RWPE1 (cell line): ENCODE measurements at regions of chr11 and their contacts with region 1.

Region 1: GRCh38 chr11:125345421-125346178 is 150.5 kb downstream of the FEZ1 start:
- DNase-seq: peak; percentile 81
- H3K27ac ChIP-seq: no peak overlapping the region
- CTCF ChIP-seq: peak; percentile 76

Region 2: GRCh38 chr11:125164422-125165110 is 181.0 kb before region 1 on chr11 and contains the start of gene PKNOX2:
- CTCF ChIA-PET with region 1: interaction called, 13 read pairs
- POLR2A ChIA-PET with region 1: no interaction called
- DNase-seq: peak; percentile 73
- H3K27ac ChIP-seq: no peak within 1 kb of the TSS; the same call in 1 of the 2 replicates
- CTCF ChIP-seq: peak; percentile 83

Region 3: DNA sequence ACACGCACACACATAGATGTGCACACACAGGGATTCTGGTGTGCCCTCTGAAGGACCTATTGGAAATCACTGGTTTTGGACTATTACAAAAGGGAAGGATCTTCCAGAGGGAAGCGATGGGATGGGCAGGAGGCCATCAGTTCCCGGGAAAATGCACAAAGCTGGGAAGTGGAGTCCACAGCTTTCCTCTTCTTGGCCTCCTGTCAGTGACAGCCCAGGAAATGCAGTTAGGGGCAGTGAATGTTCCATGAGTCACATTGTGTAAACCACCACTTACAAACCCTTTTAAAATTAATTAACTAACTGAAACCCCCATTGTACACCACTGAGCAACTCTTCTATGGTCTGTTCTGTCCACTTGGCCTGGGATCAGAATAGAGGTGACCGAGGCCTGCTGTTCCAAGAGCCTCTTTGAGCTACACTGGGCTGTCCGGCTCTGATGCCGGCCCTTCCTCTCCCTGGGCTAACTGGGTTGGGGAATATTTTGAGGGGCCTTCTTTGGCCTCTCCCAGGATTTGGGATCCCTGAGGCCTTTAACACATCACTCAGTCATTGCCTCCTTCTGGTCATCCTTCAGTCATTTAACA is 12.7 kb after region 1 on chr11:
- CTCF ChIA-PET with region 1: interaction called, 11 read pairs
- POLR2A ChIA-PET with region 1: no interaction called
- DNase-seq: no peak
- H3K27ac ChIP-seq: no peak overlapping the region
- CTCF ChIP-seq: no peak